HEK293T (cell line): ENCODE measurements at regions of chr1 and their contacts with region 1.

Region 1: GRCh38 chr1:1399187-1399871 is at the start of gene CCNL2:
- DNase-seq: peak; percentile 99

Region 2: GRCh38 chr1:1374929-1375662 is 24.2 kb before region 1 on chr1 and contains the start of gene AURKAIP1:
- CTCF ChIA-PET with region 1: interaction called, 3 read pairs
- POLR2A ChIA-PET with region 1: interaction called, 54 read pairs
- DNase-seq: peak; percentile 98

Region 3: GRCh38 chr1:1415751-1416150 is 16.4 kb after region 1 on chr1:
- CTCF ChIA-PET with region 1: interaction called, 9 read pairs
- POLR2A ChIA-PET with region 1: interaction called, 10 read pairs
- DNase-seq: no peak